ENCODE measurements at regions of chr1 and their contacts with region 1.

Region 1: GRCh38 chr1:203127666-203128430 is at the start of gene ADORA1:
- DNase-seq: peak in 1 of 2 experiments; percentile 82
- H3K4me3 ChIP-seq: peak within 1 kb of the TSS; percentile 16 to 64 (median 56)
- H3K27ac ChIP-seq: no peak within 1 kb of the TSS
- H3K4me1 ChIP-seq: peaks cover 3 to 22% (median 13%) of the 10 kb centered on the region in 4 experiments
- H3K27me3 ChIP-seq: peaks cover 5 to 32% (median 18%) of the 10 kb centered on the region in 4 experiments
- CTCF ChIP-seq: peak in 2 of 3 experiments; percentile 14 to 17; a peak in 2 of 4 replicates
- EP300 ChIP-seq: no peak
- POLR2A ChIP-seq: 0 out of 3 replicates have a peak, but pooled peaks of 1 of the 2 experiments have one; percentile 31
- RAD21 ChIP-seq: peak; percentile 6 to 16; a peak in 2 of 4 replicates
- total RNA-seq, gene ADORA1: 3.3 and 3.5 TPM in 2 replicates

Region 2: GRCh38 chr1:203186446-203187303 is 58.8 kb after region 1 on chr1 and contains the start of gene CHI3L1:
- CTCF ChIA-PET with region 1: interaction called, 14 read pairs
- POLR2A ChIA-PET with region 1: no interaction called
- DNase-seq: no peak
- H3K4me3 ChIP-seq: no peak within 1 kb of the TSS
- H3K27ac ChIP-seq: no peak within 1 kb of the TSS
- H3K4me1 ChIP-seq: peaks cover 6 to 17% (median 11%) of the 10 kb centered on the region in 4 experiments
- H3K27me3 ChIP-seq: no peaks in the 10 kb centered on the region
- CTCF ChIP-seq: no peak
- EP300 ChIP-seq: no peak
- POLR2A ChIP-seq: no peak
- RAD21 ChIP-seq: no peak
- total RNA-seq, gene CHI3L1: not detected in 2 replicates

Measured in H1 (cell line).